ENCODE measurements at regions of chr19 and their contacts with region 1.

Region 1: DNA sequence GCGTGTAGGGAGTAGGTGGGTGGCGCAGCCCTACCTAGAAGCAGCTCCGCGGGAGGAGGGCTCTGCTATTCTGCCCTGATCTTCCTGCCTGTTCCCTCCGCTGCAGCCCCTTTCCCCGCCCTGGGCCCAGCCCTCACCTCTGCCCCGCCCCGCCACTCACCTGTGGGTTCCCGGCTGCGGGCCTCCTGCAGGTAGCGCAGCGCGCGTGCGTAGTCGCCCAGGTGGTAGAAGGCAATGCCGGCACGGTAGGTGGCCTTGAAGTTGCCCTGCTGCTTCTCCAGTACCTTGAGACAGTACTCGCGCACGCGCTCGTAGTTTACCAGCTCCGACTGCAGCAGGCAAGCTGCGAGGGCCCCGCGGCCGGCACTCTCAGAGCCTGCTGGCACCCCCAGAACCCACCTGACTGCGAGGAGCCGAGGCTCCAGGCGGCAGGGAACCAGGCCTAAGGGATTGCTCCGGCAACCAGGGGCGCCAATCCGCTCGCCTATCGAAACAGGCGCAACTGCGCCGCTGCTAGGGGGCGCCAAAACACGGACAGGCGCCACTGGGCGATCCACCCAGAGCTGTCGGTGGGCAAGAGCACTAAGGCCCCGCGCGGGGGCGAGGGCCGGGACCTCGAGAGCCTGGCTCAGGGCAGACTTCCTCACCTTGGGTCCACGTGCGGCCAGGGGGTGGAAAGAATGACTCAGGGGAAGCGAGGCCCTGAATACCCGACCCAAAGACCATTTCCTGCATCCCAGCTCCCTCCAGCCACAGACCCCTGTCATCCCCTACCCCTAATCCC is 965 bp downstream of the TTC9B start:
- DNase-seq: peak; percentile 41
- H3K4me3 ChIP-seq: no peak overlapping the region
- H3K27ac ChIP-seq: no peak overlapping the region
- H3K4me1 ChIP-seq: no peaks in the 10 kb centered on the region
- H3K27me3 ChIP-seq: peaks cover 31% of the 10 kb centered on the region
- CTCF ChIP-seq: peak; percentile 81

Region 2: GRCh38 chr19:40155749-40156265 is 61.4 kb before region 1 on chr19:
- CTCF ChIA-PET with region 1: interaction called, 10 read pairs
- POLR2A ChIA-PET with region 1: no interaction called
- intact Hi-C with region 1: no loop called
- DNase-seq: peak; percentile 67
- H3K4me3 ChIP-seq: no peak overlapping the region
- H3K27ac ChIP-seq: no peak overlapping the region
- H3K4me1 ChIP-seq: no peaks in the 10 kb centered on the region
- H3K27me3 ChIP-seq: no peaks in the 10 kb centered on the region
- CTCF ChIP-seq: peak; percentile 54

Measured in A673 (cell line).